Gastrocnemius medialis (tissue), 4 donors: ENCODE measurements at regions of chr2 and their contacts with region 1.

Region 1: DNA sequence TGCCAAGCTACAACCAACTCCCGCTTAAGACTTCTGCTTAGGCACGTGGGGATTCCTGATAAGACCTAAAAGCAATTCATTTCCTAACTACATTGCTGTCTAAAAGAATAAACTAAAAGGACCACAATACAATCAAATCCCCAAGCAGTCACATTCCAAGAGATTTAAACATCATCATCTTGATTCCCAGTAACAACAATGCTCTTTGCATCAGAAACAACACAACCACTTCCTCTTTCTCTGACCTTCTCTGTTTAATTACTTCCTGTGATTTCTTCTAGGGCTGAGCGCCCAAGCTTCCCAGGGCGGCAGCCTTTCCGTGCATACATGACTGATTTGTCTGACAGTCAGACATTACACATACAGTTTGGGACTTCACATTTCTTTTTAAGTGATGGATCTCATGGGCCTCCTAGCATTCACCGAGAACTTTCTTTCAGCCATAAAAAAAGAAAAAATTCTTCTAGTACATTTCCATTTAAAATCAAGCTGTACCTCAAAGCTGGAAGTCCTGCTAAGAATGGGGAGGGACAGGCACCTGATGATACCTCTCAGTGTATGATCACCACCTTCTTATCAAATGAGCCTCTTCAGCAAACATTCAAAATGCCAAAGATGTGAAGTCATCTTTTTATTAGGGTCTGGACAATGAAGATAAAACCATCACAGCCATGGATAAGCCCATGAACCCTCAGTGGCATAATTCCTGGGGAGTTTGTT is 11.5 kb downstream of the SPRED2 start:
- DNase-seq: no peak
- ATAC-seq: peak in 1 of 2 donors; percentile 44
- H3K4me3 ChIP-seq: no peak overlapping the region
- H3K27ac ChIP-seq: peak overlapping the region in 1 of 4 donors; percentile 22
- H3K4me1 ChIP-seq: peaks cover 17 to 19% of the 10 kb centered on the region in 2 donors
- H3K27me3 ChIP-seq: no peaks in the 10 kb centered on the region
- CTCF ChIP-seq: no peak
- POLR2A ChIP-seq: no peak

Region 2: GRCh38 chr2:65278531-65278981 is 142.3 kb before region 1 on chr2:
- in situ Hi-C with region 1: loop called in 3 of 4 experiments (anchors 10 to 25 kb)
- intact Hi-C with region 1: no loop called
- DNase-seq: no peak
- ATAC-seq: no peak
- H3K4me3 ChIP-seq: no peak overlapping the region
- H3K27ac ChIP-seq: peak overlapping the region in 1 of 4 donors; percentile 10
- H3K4me1 ChIP-seq: peaks cover 0 to 22% of the 10 kb centered on the region in 2 donors
- H3K27me3 ChIP-seq: peaks cover 0 to 4% (median 3%) of the 10 kb centered on the region in 3 donors
- CTCF ChIP-seq: no peak
- POLR2A ChIP-seq: no peak